Thyroid gland (tissue), 4 donors: ENCODE measurements at regions of chr2 and their contacts with region 1.

Region 1: DNA sequence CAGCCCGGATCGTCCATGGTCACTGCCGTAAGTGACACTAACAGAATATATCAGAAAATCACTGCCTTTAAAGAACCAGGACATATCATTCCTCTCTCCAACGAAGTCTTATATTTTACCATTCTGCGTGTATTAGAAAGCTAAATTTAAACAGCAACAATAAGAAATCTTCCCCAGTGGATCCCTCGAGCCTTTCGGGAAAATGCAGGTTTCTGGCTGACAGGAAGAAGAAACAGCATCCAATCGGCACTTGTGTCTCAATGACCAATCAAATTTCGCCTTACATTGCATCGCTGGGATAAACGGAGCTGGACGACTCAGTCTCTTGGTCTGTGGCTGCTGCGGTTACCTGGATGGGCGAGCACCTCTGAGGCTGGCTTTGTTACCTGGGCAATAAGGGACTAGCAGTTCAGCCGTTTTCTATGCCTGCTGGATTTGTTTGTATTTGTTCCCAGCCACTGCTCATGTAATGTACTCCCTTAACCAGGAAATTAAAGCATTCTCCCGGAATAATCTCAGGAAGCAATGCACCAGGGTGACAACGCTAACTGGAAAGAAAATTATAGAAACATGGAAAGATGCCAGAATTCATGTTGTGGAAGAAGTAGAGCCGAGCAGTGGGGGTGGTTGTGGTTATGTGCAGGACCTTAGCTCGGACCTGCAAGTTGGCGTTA is at the start of gene DUSP19:
- DNase-seq: peak; percentile 91 to 92
- H3K4me3 ChIP-seq: peak within 1 kb of the TSS; percentile 29 to 49 (median 37)
- H3K27ac ChIP-seq: peak within 1 kb of the TSS; percentile 32 to 82 (median 69)
- H3K4me1 ChIP-seq: peaks cover 0 to 6% of the 10 kb centered on the region in 2 donors
- H3K27me3 ChIP-seq: no peaks in the 10 kb centered on the region
- CTCF ChIP-seq: no peak
- POLR2A ChIP-seq: peak in 1 of 2 donors; percentile 93
- total RNA-seq, gene DUSP19: 3.2 to 5.9 (median 3.7) TPM

Region 2: DNA sequence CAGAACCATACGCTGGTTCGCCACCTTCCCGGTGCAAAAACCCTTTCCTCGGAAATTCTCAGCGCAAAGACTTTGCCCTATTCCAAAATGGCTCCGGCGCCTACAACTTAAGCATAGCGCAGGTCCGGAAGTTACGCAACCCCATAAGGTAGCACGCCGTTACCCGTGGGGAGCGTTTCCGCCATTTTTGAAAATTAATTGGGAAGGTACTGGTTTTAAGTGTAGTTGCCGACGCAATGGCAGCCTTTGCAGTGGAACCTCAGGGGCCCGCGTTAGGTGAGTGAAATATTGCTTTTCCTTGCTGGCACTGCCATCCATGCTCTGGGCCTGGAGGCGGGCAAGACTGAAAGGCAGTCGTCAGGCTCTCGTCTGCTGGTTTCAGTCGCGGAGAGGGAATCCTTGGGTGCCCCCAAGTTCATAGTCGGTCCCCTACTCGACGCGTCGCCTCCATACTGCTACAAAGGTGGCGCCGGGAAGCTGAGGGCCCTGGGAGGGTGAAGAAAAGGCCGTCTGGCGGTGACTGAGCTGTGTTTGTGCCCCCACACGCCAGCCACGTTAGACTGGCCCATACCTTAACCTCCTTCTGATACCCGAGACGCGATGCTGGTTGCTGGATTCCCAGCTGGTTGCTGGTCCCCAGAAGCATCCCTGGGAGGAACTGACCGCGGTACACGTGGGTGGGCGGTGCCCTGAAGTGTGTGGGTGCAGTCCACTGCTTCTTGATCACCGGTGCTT is 45.8 kb after region 1 on chr2 and contains the start of gene NUP35:
- intact Hi-C with region 1: loop called (anchors 5 kb)
- DNase-seq: peak; percentile 85 to 86
- H3K4me3 ChIP-seq: peak within 1 kb of the TSS; percentile 41 to 86 (median 62)
- H3K27ac ChIP-seq: peak within 1 kb of the TSS; percentile 20 to 78 (median 77)
- H3K4me1 ChIP-seq: peaks cover 0 to 6% of the 10 kb centered on the region in 2 donors
- H3K27me3 ChIP-seq: no peaks in the 10 kb centered on the region
- CTCF ChIP-seq: no peak
- POLR2A ChIP-seq: peak in 1 of 2 donors; percentile 55
- total RNA-seq, gene NUP35: 13.7 to 19.1 (median 17.2) TPM